OCI-LY7 (cell line): ENCODE measurements at regions of chr9 and their contacts with region 1.

Region 1: GRCh38 chr9:12958279-12958678 is 183.5 kb downstream of the LURAP1L start:
- DNase-seq: no peak
- H3K4me3 ChIP-seq: no peak overlapping the region
- H3K27ac ChIP-seq: no peak overlapping the region
- H3K4me1 ChIP-seq: no peaks in the 10 kb centered on the region
- CTCF ChIP-seq: no peak

Region 2: DNA sequence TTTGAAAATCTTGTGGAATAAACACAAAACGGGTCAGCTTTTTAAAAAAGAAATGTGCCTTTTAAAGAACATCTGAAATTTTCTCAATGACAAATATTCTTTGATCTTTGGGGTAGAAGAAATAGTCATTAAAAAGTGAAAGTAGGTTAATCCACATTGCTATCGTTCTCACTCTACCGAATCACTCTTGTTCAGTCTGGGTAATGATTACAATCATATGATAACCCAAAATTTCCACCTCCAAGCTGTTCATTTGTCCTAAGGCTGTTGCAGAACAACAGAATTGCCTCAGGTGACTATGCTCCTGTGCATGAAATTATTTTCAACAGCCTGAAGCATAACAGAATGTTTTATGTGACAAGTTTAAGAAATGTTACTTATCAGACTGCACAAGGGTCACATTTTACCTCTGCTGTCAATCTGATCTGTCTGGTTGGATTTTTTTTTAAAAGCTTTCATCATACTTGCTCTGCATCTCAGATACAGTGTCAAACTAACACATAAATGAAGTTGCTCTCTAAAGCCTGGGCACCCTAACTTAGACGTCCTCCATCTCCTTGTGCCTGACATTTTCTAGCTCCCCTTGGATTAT is 43.8 kb after region 1 on chr9:
- CTCF ChIA-PET with region 1: no interaction called
- POLR2A ChIA-PET with region 1: no interaction called
- intact Hi-C with region 1: loop called (anchors 1 kb)
- DNase-seq: no peak
- H3K4me3 ChIP-seq: no peak overlapping the region
- H3K27ac ChIP-seq: no peak overlapping the region
- H3K4me1 ChIP-seq: no peaks in the 10 kb centered on the region
- CTCF ChIP-seq: no peak